IMR-90 (cell line): ENCODE measurements at regions of chr6 and their contacts with region 1.

Region 1: DNA sequence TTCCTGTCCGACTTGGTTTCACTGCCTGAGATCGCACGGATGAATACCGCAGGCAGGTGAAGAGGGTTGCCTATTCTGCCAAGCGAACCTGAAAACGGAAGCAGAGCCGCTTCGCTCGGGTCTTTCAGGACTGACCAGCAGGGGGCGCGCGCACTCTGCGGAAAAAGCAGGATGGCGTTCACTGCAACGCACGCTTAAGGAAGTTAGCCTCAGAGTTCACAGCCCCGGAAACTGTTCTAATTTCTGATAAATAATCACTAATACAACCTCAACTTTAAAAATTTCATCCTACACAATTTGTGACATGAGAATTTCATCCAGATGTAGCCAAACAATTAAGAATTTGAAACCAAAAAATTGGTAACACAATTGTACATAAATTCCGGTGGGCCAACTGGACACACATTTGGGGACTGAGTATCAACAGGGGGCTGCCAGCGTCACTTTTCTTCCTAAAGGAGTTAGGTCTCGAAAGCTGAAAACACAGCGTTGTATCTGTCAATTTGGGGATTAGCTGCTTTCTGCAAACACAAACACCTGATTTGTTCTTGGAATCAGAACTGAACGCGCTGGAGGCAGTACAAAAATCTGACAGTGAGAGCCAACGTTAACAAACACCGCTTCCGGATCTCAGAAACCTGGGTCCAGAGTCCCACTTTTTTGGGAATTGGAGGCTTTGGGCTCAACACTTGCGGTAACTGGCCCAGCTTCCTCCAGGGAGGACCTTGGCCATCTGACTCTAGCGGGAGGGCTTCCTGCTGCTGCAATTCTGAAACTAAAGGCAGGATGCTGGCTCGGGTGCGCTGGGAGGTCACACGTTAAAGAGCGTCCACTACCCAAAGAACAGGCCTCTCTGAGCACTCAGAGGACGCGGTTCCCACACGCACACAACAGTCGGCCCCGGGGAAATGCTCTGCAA is 8.8 kb downstream of the PXDC1 start:
- DNase-seq: peak; percentile 72
- ATAC-seq: peak; percentile 59
- H3K4me3 ChIP-seq: no peak overlapping the region
- H3K27ac ChIP-seq: no peak overlapping the region
- H3K4me1 ChIP-seq: peaks cover 39% of the 10 kb centered on the region
- H3K27me3 ChIP-seq: no peaks in the 10 kb centered on the region
- CTCF ChIP-seq: peak; percentile 89
- POLR2A ChIP-seq: no peak
- RAD21 ChIP-seq: peak; percentile 93

Region 2: DNA sequence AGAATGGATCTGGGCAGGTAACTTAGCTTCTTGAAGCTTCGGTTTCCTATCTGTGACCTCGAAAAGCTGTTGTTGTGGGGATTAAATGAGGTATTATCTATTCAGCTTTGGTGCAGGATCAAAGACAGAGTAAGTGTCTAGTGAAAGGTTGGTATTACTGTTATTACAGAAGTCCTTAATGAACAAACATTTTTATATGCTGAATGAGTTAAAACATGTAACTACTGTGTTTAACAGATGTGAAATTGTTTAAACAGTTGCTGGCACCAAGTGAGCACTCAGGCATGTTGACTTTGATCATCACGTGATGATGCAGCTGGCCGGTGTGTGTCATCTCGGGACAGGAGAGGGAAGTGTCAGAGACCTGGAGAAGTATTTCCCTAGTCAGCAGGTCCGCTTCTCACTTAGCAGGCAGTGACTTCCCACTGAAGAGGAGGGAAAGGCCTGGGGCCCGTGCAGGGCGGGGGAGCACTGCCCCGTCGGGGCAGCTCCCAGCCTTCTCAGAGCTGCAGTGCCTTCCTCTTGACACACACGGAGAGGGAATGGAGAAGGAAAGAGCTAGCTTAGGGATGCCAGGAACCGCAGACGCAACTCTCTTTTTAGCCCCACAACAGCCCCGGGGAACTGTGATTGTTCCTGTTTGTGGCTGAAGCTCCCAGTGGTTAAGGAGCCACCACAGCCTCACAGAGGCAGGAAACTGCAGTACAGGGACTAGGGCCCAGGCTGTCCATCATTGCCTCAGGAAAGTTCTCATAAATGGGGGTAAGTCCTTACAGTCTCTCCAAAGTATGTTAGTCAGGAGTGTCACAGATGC is 603.4 kb before region 1 on chr6:
- CTCF ChIA-PET with region 1: no interaction called
- POLR2A ChIA-PET with region 1: no interaction called
- dilution Hi-C with region 1: no loop called
- in situ Hi-C with region 1: loop called (anchors 25 kb)
- intact Hi-C with region 1: no loop called
- DNase-seq: peak; percentile 91
- ATAC-seq: peak; percentile 85
- H3K4me3 ChIP-seq: no peak overlapping the region
- H3K27ac ChIP-seq: peak overlapping the region; percentile 11; the same call in 1 of the 2 replicates
- H3K4me1 ChIP-seq: peaks cover 14% of the 10 kb centered on the region
- H3K27me3 ChIP-seq: no peaks in the 10 kb centered on the region
- CTCF ChIP-seq: no peak
- POLR2A ChIP-seq: no peak
- RAD21 ChIP-seq: peak; percentile 9; the same call in 1 of the 2 replicates

Region 3: GRCh38 chr6:3789018-3789895 is 46.6 kb after region 1 on chr6:
- CTCF ChIA-PET with region 1: no interaction called
- POLR2A ChIA-PET with region 1: no interaction called
- dilution Hi-C with region 1: no loop called
- in situ Hi-C with region 1: no loop called
- intact Hi-C with region 1: no loop called
- DNase-seq: peak; percentile 77
- ATAC-seq: peak; percentile 80
- H3K4me3 ChIP-seq: no peak overlapping the region
- H3K27ac ChIP-seq: peak overlapping the region; percentile 74; the same call in 1 of the 2 replicates
- H3K4me1 ChIP-seq: peaks cover 13% of the 10 kb centered on the region
- H3K27me3 ChIP-seq: no peaks in the 10 kb centered on the region
- CTCF ChIP-seq: no peak
- POLR2A ChIP-seq: no peak
- RAD21 ChIP-seq: no peak

Region 4: DNA sequence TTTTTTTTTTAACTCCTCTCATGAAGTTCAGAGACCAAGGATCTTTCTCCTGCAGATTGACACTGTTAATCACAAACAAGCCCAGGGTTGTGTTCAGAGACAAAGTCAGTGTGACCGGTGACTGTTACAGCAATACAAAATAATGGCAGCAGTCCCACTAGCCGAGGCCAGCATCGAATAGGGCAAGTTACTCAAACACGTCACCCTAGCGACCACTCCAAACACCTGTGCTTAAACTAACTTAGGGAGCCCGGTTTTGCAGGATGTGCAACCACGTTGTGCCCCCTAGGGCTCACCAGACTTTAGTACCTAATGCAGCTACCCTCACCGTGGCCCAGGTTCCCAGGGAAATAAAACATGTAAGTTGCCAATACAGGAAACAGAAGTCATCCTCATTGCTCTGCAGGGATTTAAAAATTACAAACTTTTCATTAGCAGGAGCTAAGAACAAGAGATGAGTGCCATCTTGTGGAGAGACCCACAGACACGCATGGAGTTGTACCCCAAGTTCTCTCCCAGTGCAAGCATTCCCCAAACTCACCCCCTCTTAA is 144.5 kb after region 1 on chr6:
- CTCF ChIA-PET with region 1: interaction called, 6 read pairs
- POLR2A ChIA-PET with region 1: no interaction called
- dilution Hi-C with region 1: no loop called
- in situ Hi-C with region 1: loop called (anchors 10 kb)
- intact Hi-C with region 1: loop called (anchors 1 kb)
- DNase-seq: peak; percentile 54
- ATAC-seq: 0 out of 2 replicates have a peak, but pooled peaks have one; percentile 35
- H3K4me3 ChIP-seq: no peak overlapping the region
- H3K27ac ChIP-seq: no peak overlapping the region
- H3K4me1 ChIP-seq: peaks cover 8% of the 10 kb centered on the region
- H3K27me3 ChIP-seq: 0 out of 2 replicates have a peak, but pooled peaks cover 2% of the 10 kb centered on the region
- CTCF ChIP-seq: peak; percentile 64
- POLR2A ChIP-seq: no peak
- RAD21 ChIP-seq: peak; percentile 74

Region 5: DNA sequence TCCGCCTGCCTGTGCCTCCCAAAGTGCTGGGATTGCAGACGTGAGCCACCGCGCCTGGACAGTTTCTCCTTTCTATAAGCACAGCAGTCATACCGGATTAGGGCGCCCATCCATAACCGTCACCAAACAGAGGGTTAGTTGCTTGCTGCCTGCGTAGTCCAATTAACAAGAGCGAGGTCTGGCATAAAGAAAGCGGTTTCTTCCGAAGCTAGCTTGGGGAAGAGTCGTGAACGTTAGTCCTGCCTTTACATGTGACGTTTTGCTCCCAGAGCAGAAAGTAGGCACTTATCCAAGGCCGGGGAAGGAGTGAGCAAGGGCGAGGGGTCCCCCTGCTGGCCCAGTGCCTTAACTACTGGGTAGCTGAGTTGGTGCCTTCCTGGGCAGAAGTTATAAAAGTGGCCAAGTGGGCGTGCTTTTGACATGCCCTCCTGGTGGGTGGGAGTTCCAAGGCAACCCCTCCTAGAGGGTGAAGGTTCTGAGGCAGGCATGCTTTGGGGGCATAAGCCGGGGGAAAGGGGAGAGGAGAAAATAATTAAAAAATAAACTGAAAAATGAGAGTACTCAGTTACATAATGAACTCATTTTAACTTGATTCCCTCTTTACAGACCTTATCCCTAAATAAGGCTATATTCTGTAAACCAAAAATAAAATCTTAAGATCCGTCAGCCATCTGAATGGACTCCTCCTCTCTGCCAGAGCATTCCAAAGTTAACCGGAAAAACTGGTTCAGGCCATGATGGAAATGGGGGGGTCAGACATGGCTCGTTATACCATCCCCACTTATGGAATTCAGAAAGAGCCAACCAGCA is 248.2 kb after region 1 on chr6:
- CTCF ChIA-PET with region 1: no interaction called
- POLR2A ChIA-PET with region 1: no interaction called
- dilution Hi-C with region 1: no loop called
- in situ Hi-C with region 1: no loop called
- intact Hi-C with region 1: loop called (anchors 1 kb)
- DNase-seq: peak; percentile 88
- ATAC-seq: peak; percentile 96
- H3K4me3 ChIP-seq: peak overlapping the region; percentile 5; the same call in 1 of the 2 replicates
- H3K27ac ChIP-seq: peak overlapping the region; percentile 11; the same call in 1 of the 2 replicates
- H3K4me1 ChIP-seq: peaks cover 6% of the 10 kb centered on the region
- H3K27me3 ChIP-seq: no peaks in the 10 kb centered on the region
- CTCF ChIP-seq: peak; percentile 97
- POLR2A ChIP-seq: no peak
- RAD21 ChIP-seq: peak; percentile 94

Region 6: DNA sequence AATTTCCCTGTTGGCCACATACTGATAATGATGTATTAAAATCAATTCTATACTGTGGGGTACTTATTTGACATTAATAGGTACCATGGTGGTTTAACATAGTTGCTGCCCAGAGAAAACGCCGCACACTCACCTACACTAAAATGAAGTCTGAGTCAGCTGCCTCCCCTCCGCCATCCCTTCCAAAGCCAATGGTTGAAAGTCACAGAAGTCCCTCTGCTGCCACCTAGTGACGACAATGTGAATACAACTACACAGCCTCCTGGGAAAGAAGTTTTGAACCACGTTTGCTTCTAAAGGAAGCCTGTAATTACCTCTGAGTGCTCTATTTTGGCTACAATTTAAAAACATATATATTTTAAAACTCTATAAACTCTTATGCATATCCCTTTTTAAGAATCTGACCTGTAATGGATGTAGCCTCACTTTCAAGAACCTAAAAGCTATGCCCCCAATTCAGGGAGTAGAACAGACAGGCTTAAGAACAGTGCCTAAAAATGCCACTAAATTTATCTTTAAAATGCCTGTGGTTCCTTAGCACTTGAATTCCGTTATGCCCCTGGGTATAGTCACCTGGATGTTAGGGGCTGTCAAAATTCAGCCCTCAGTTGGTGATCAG is 413.3 kb after region 1 on chr6:
- CTCF ChIA-PET with region 1: no interaction called
- POLR2A ChIA-PET with region 1: no interaction called
- dilution Hi-C with region 1: no loop called
- in situ Hi-C with region 1: no loop called
- intact Hi-C with region 1: loop called (anchors 10 kb)
- DNase-seq: peak; percentile 86
- ATAC-seq: peak; percentile 99
- H3K4me3 ChIP-seq: no peak overlapping the region
- H3K27ac ChIP-seq: no peak overlapping the region
- H3K4me1 ChIP-seq: no peaks in the 10 kb centered on the region
- H3K27me3 ChIP-seq: no peaks in the 10 kb centered on the region
- CTCF ChIP-seq: peak; percentile 87
- POLR2A ChIP-seq: no peak
- RAD21 ChIP-seq: peak; percentile 89